ENCODE measurements at regions of chr11 and their contacts with region 1.

Region 1: DNA sequence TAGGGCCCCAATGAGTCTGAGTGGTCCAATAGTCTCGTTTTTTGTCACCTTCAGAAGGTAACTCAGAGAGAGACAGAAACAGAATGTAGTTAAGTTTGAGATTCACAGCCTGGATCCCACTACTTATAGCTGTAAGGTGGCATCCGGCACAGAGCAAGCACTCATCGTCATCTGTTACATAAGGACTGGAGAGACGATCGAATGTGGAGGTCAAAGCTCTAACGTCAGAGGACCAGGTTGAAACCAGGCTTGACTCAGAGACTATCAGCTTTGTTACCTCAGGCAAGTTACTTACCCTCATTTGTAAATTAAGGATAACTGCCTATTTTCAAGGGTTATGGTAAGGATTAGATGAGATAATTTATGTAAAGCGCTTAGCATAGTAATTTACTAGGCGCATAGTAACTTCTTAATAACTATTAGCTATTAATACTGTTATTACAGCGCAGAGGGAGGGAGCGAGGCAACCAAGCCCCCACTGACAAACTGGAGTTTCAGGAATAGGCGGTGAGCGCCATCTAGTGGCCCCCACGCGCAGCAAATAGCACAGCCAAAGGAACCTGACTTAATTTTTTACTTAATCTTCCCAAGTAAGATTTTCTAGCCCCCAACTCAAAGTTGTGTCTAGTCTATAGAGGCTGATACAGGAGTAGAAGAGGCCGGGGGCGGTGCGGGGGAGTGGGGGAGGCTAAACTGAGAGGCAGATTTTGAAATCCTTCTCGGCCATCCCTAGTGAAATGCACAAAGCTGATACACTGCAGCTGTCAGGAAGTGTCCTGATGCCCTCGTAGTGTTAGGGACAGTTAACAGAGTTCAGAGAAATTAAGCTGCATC is 29.0 kb upstream of the API5 start:
- DNase-seq: peak; percentile 56
- H3K4me3 ChIP-seq: peak overlapping the region in 1 of 2 experiments; percentile 38; a peak in 1 of 4 replicates
- H3K27ac ChIP-seq: no peak overlapping the region
- H3K4me1 ChIP-seq: peaks cover 4 to 16% of the 10 kb centered on the region in 2 experiments; a peak in 2 of 4 replicates
- H3K27me3 ChIP-seq: no peaks in the 10 kb centered on the region
- CTCF ChIP-seq: peak; percentile 98
- EP300 ChIP-seq: no peak
- RAD21 ChIP-seq: peak; percentile 84

Region 2: DNA sequence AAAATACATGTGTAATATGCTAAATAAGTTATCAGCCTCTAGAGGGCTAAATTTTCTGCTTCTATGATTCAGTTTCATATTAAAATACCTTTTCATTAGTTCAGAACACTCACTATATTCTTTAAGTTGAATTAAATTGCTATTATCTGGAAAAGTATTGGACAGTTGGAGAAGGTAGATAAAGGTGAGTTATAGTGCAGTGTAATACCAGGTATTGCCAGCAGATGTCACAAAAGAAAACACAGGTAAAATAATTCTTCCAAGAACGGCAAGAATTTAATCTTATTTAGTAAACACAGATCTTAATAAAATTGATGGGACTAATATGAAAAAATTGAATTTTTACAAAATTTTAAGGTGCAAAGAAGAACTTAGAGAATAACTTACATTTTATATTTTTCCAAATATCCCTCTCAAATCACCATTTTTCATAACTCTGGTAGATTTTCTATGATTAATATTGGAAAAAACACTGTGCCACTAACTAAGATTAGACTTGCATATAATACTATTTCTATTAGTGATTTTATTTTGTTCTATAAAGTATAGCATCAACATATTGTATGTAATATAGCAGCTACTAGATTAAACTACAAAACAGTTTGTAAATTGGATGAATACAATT is 1821.7 kb before region 1 on chr11:
- CTCF ChIA-PET with region 1: interaction called, 16 read pairs
- POLR2A ChIA-PET with region 1: no interaction called
- DNase-seq: no peak
- H3K4me3 ChIP-seq: no peak overlapping the region
- H3K27ac ChIP-seq: no peak overlapping the region
- H3K4me1 ChIP-seq: peaks cover 0 to 3% of the 10 kb centered on the region in 2 experiments; a peak in 1 of 4 replicates
- H3K27me3 ChIP-seq: no peaks in the 10 kb centered on the region
- CTCF ChIP-seq: peak; percentile 72
- EP300 ChIP-seq: no peak
- RAD21 ChIP-seq: peak; percentile 62

Region 3: DNA sequence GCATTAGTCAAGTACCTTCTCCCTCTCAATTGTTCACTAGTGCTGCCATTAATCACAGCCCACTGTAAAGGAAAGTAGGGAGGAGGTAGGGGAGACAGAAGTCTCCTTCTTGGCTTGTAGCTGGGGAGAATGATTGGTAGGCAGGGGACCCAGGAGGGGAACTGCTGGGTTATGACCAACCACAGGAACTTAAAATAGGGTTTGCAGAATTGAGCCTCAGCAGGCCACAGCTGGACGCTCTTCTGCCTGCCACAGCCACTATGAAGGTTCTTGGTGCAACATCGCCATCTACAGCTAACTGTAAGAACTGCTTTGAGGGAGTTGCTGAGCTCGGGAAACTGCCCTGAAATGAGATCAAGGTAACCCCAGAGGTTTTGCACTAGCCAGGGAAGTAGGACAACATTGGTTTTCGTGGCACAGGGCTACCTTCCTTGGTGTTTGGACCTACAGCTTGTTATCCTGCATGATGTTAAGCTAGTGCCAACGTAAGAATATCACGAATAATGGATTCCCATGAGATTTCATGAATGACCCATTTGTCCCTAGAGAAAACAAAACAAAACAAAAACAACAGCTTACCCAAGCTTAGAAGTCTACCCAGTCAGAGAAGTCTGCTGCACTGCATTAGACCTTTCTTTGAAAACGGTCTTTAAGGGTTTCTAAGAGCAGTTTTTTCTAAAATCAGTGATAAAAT is 758.1 kb before region 1 on chr11:
- CTCF ChIA-PET with region 1: interaction called, 27 read pairs
- POLR2A ChIA-PET with region 1: no interaction called
- DNase-seq: peak; percentile 50
- H3K4me3 ChIP-seq: peak overlapping the region in 1 of 2 experiments; percentile 48; a peak in 1 of 4 replicates
- H3K27ac ChIP-seq: no peak overlapping the region
- H3K4me1 ChIP-seq: peaks cover 0 to 3% of the 10 kb centered on the region in 2 experiments; a peak in 1 of 4 replicates
- H3K27me3 ChIP-seq: no peaks in the 10 kb centered on the region
- CTCF ChIP-seq: peak; percentile 44
- EP300 ChIP-seq: no peak
- RAD21 ChIP-seq: peak; percentile 92

Region 4: GRCh38 chr11:43172477-43172876 is 110.3 kb before region 1 on chr11:
- CTCF ChIA-PET with region 1: interaction called, 10 read pairs
- POLR2A ChIA-PET with region 1: no interaction called
- DNase-seq: no peak
- H3K4me3 ChIP-seq: no peak overlapping the region
- H3K27ac ChIP-seq: no peak overlapping the region
- H3K4me1 ChIP-seq: no peaks in the 10 kb centered on the region; a peak in 1 of 4 replicates
- H3K27me3 ChIP-seq: no peaks in the 10 kb centered on the region
- CTCF ChIP-seq: no peak
- EP300 ChIP-seq: no peak
- RAD21 ChIP-seq: no peak

Region 5: DNA sequence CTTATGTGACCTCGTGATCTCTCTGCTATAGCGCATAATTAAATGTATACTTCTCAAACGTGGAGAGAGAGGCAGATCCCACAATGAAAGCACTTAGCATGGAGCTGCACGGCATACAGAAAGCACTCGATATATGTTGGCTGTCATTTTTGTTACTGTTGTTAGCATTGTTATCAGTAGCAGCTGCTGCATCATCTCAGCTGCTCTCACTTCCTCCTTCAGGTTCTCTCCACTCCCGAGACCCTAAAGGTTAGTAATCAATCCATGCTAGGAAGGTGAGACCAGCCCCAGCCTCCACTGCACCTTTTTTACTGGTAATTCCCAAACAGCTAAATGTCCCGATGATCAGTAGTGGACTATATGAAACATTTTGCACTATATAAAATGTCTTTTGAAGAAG is 15.6 kb after region 1 on chr11:
- CTCF ChIA-PET with region 1: interaction called, 27 read pairs
- POLR2A ChIA-PET with region 1: no interaction called
- DNase-seq: no peak
- H3K4me3 ChIP-seq: no peak overlapping the region
- H3K27ac ChIP-seq: no peak overlapping the region
- H3K4me1 ChIP-seq: no peaks in the 10 kb centered on the region
- H3K27me3 ChIP-seq: no peaks in the 10 kb centered on the region
- CTCF ChIP-seq: no peak
- EP300 ChIP-seq: no peak
- RAD21 ChIP-seq: no peak

Region 6: GRCh38 chr11:43486141-43486540 is 203.3 kb after region 1 on chr11:
- CTCF ChIA-PET with region 1: no interaction called
- POLR2A ChIA-PET with region 1: no interaction called
- DNase-seq: no peak
- H3K4me3 ChIP-seq: no peak overlapping the region
- H3K27ac ChIP-seq: no peak overlapping the region
- H3K4me1 ChIP-seq: no peaks in the 10 kb centered on the region
- H3K27me3 ChIP-seq: no peaks in the 10 kb centered on the region
- CTCF ChIP-seq: no peak
- EP300 ChIP-seq: no peak
- RAD21 ChIP-seq: no peak

Measured in SK-N-SH (cell line).